ENCODE measurements at regions of chr3 and their contacts with region 1.

Region 1: GRCh38 chr3:115783938-115784738 is 160.8 kb downstream of the GAP43 start:
- DNase-seq: peak; percentile 90 to 94
- ATAC-seq: peak; percentile 94
- H3K4me3 ChIP-seq: peak overlapping the region; percentile 69
- H3K27ac ChIP-seq: peak overlapping the region; percentile 86 to 87
- H3K4me1 ChIP-seq: peaks cover 25% of the 10 kb centered on the region
- CTCF ChIP-seq: peak; percentile 85
- EP300 ChIP-seq: no peak
- POLR2A ChIP-seq: peak; percentile 36
- RAD21 ChIP-seq: peak; percentile 59 to 65

Region 2: DNA sequence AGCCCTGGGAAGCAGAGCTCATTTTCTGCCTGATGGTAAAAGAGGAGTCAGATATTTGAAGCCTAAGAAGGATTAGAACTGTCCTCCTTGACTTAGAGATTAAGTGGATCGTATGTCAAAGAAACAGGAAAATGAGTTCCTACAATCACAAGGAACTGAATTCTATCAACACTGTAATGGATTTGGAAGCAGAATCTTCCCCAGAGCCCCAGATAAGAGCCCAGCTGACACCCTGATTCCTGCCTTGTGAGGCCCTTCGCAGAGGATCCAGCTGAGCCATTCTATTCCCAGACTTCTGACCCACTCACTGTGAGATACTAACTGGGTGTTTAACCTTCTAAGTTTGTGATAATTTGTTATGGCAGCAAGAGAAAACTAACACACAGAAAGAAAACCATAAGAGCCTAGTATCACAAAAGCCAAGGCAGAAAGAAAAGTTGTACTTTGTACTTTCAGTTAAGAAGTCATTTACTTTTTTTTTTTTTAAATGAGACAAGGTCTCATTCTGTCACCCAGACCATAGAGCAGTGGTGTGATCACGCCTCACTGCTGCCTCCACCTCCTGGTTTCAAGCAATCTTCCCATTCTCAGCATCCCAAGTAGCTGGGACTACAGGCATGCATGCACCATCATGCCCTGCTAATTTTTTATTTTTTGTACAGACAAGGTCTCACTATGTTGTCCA is 575.9 kb before region 1 on chr3:
- CTCF ChIA-PET with region 1: interaction called, 15 read pairs
- POLR2A ChIA-PET with region 1: no interaction called
- DNase-seq: no peak
- ATAC-seq: no peak
- H3K4me3 ChIP-seq: no peak overlapping the region
- H3K27ac ChIP-seq: no peak overlapping the region
- H3K4me1 ChIP-seq: no peaks in the 10 kb centered on the region
- CTCF ChIP-seq: no peak
- EP300 ChIP-seq: no peak
- POLR2A ChIP-seq: no peak
- RAD21 ChIP-seq: no peak

Region 3: GRCh38 chr3:115652738-115653137 is 131.4 kb before region 1 on chr3:
- CTCF ChIA-PET with region 1: no interaction called
- POLR2A ChIA-PET with region 1: no interaction called
- DNase-seq: no peak
- ATAC-seq: no peak
- H3K4me3 ChIP-seq: no peak overlapping the region
- H3K27ac ChIP-seq: no peak overlapping the region
- H3K4me1 ChIP-seq: peaks cover 2% of the 10 kb centered on the region; the same call in 2 of the 3 replicates
- CTCF ChIP-seq: no peak
- EP300 ChIP-seq: no peak
- POLR2A ChIP-seq: no peak
- RAD21 ChIP-seq: no peak

Region 4: GRCh38 chr3:115715241-115715745 is 68.8 kb before region 1 on chr3:
- CTCF ChIA-PET with region 1: interaction called, 13 read pairs
- POLR2A ChIA-PET with region 1: no interaction called
- DNase-seq: no peak
- ATAC-seq: no peak
- H3K4me3 ChIP-seq: no peak overlapping the region
- H3K27ac ChIP-seq: no peak overlapping the region
- H3K4me1 ChIP-seq: no peaks in the 10 kb centered on the region
- CTCF ChIP-seq: no peak
- EP300 ChIP-seq: no peak
- POLR2A ChIP-seq: no peak
- RAD21 ChIP-seq: no peak

Region 5: GRCh38 chr3:115804722-115805121 is 20.6 kb after region 1 on chr3:
- CTCF ChIA-PET with region 1: interaction called, 39 read pairs
- POLR2A ChIA-PET with region 1: interaction called, 5 read pairs
- DNase-seq: peak; percentile 28 to 66
- ATAC-seq: peak; percentile 44 to 51; a peak in 5 of 6 replicates
- H3K4me3 ChIP-seq: no peak overlapping the region
- H3K27ac ChIP-seq: peak overlapping the region; percentile 75 to 81
- H3K4me1 ChIP-seq: peaks cover 53% of the 10 kb centered on the region
- CTCF ChIP-seq: no peak
- EP300 ChIP-seq: peak; percentile 53 to 56; a peak in 3 of 5 replicates
- POLR2A ChIP-seq: no peak
- RAD21 ChIP-seq: no peak

Region 6: GRCh38 chr3:115819785-115820384 is 35.7 kb after region 1 on chr3:
- CTCF ChIA-PET with region 1: interaction called, 61 read pairs
- POLR2A ChIA-PET with region 1: interaction called, 4 read pairs
- DNase-seq: peak; percentile 41 to 82
- ATAC-seq: peak; percentile 87 to 95
- H3K4me3 ChIP-seq: no peak overlapping the region
- H3K27ac ChIP-seq: no peak overlapping the region
- H3K4me1 ChIP-seq: peaks cover 7% of the 10 kb centered on the region; the same call in 2 of the 3 replicates
- CTCF ChIP-seq: peak; percentile 100
- EP300 ChIP-seq: no peak
- POLR2A ChIP-seq: no peak
- RAD21 ChIP-seq: peak; percentile 87 to 91

Measured in A549 (cell line).